Left cardiac atrium (tissue), 4 donors: ENCODE measurements at regions of chr19 and their contacts with region 1.

Region 1: GRCh38 chr19:49200238-49200862 is 42.8 kb downstream of the TRPM4 start:
- DNase-seq: no peak
- ATAC-seq: peak; percentile 31 to 34

Region 2: DNA sequence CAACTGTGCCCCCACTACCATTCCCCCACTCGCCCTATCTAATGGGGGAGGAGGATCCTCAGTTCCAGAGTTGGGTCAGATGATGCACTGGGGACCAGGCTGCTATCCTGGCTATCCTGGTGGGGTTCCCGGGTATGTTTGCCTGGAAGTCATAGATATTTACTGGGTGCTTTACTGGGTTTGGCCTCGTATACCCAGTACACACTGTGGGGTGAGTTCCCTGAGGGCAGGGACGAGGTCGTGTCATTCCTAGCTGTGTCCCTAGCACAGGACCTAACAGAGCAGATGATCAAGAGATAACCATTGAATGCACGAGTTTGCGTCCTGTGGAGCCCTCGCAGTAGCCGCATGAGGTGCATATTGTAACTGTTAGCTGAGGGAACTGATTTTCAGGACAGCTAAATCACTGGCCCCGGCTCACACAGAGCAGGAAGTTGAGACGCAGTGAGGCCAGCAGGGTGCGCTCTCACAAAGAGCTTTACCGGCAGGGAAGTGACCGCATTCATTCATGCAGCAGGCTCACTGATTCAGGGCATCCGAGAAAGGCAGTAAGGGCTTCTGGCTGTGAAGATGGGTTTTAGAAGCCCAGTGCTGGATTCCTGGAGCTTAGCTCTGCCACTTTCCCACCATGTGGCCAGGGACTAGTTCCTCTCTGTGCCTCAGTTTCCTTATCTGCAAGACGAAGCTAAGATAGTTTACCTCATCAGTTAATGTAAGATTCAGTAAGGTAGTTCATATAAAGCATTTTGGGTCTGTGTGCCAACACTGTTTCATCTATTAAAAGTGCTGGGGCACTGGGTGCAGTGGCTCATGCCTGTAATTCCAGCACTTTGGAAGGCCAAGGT is 200.6 kb before region 1 on chr19:
- intact Hi-C with region 1: loop called in 1 of 2 experiments (anchors 10 kb)
- DNase-seq: peak; percentile 58
- ATAC-seq: peak; percentile 47 to 60

Region 3: DNA sequence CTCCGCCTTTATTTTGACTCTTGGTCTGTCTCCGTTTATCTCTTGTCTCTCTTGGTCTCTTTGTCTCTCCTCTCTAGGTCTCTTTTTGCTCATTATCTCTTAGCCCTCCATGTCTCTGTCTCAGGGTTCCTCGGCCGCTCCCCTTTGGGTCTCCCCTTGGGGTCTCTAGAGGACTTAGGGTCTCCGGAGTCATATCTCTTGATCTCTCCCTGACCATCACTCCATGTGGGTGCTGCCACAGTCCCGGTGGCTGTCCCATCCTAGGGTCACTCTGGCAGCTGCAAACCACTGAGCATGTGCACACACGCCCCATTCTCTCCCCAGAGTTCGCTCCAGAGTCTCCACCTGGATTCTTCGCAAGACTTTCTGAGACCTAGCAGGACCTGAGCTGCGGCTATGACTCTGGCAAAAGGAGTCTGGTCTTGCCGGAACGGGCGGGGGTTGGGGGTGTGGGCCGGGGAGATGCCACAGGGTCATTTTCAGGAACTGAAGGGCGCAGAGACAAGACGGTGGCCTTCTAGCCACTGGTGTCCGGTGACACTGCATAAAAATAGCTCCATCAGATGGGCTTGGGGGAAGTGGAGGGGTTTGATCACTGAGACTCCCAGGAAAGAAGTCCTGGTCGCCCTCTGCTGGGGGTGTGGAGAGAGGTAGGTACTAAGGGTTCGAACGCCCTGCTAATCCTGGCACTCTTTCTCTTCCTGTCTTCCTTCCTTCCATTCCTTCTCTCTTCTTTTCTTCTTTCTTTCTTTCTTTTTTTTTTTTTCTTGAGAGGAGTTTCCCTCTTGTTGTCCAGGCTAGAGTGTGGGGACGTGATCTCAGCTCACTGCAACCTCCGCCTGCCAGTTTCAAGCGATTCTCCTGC is 126.6 kb before region 1 on chr19:
- intact Hi-C with region 1: loop called in 1 of 2 experiments (anchors 5 kb)
- DNase-seq: no peak
- ATAC-seq: peak; percentile 33 to 54

Region 4: DNA sequence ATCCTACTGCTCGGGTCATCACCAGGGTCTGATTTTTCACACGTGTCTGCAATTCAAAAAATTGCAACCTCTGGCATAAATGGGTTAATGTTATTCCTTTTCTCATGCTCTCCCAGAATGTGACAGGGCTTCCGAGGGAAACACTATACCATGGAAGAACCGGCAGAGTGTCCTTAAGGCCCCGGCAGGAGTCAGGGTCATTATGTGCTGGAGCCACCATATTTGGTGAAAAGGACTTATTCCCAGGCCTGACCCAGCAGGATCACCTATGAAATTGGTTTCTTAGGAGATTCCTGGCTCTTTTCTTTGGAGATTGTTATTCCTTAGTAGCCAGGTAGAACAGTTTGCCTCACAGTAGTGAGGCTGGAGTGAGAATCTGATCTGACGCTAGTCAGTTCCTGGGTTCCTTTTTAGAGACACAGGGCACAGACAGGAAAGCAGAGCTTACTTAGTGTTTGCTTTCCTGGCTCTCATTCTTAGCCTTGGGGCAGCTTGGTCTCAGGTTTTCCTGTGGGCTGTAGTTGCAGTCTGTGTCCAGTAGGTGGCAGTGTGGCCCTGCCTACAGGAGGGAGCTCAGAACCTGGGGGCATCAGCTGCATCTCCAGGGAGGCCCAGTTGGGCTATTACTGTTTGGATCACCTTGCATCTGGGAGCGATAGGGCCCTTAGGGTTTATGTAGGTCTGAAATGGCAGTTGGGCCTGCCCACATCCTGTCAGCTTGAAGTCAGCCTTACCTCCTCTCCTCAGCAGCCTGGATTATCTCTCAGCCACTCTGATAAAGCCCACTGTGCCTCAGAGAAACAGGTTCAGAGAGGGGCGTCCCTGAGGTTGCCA is 102.7 kb before region 1 on chr19:
- intact Hi-C with region 1: loop called (anchors 5 kb)
- DNase-seq: peak; percentile 61
- ATAC-seq: peak; percentile 55 to 65

Region 5: GRCh38 chr19:49104229-49104864 is 96.0 kb before region 1 on chr19:
- intact Hi-C with region 1: loop called (anchors 5 kb)
- DNase-seq: no peak
- ATAC-seq: no peak